ENCODE measurements at regions of chr3 and their contacts with region 1.

Region 1: GRCh38 chr3:45656575-45657363 is 32.4 kb upstream of the SACM1L start:
- DNase-seq: peak; percentile 86 to 93
- H3K4me3 ChIP-seq: no peak overlapping the region
- H3K27ac ChIP-seq: no peak overlapping the region
- H3K4me1 ChIP-seq: peaks cover 0 to 5% of the 10 kb centered on the region in 2 donors
- H3K27me3 ChIP-seq: no peaks in the 10 kb centered on the region
- CTCF ChIP-seq: peak; percentile 92 to 96 (median 93)
- POLR2A ChIP-seq: no peak

Region 2: GRCh38 chr3:45037734-45038455 is 618.9 kb before region 1 on chr3:
- intact Hi-C with region 1: loop called (anchors 5 kb)
- DNase-seq: peak; percentile 91 to 93
- H3K4me3 ChIP-seq: no peak overlapping the region
- H3K27ac ChIP-seq: no peak overlapping the region
- H3K4me1 ChIP-seq: no peaks in the 10 kb centered on the region
- H3K27me3 ChIP-seq: no peaks in the 10 kb centered on the region
- CTCF ChIP-seq: peak; percentile 87 to 97 (median 92)
- POLR2A ChIP-seq: no peak

Region 3: DNA sequence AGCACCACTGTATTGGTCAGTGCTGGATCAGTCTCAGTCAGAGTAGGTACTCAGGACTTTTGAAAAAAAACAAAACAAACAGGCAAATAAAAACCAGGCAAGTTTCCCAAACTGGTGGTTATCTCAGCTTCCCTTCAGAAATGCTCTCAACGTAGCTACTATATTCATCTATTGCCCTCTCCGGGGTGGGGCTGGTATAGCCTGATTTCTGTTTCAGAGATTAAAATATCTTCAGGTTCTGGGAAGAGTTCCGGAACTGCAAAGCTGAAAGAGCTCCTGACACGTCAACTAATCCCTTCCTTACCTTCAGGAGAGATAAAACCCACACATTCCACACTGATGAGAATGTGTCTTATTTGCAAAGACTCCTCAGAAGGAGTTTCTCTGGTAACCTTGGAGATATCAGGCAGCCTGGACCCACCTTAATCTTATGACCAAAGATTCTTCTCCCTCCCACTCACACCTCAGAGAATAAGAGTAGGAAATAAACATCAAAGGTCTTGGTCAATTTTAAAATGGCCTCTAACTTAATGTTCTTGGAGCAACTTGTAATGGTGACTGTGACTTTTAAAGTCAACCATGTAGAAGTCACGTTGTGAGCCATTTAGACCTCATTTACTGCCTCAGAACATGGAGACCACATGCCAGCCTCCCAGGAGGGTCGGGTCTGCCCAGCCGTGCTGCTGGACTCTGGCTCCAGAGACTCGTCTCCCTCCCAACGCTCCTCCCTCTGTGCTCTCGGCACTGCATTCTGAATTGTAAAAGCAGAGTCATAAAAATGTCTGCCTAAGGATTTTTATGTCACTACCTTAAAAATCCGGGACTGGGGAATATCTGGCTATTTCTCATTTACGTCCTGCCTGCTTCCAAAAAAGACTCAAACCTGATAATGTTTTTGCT is 564.4 kb before region 1 on chr3:
- intact Hi-C with region 1: no loop called
- DNase-seq: peak; percentile 65 to 79
- H3K4me3 ChIP-seq: no peak overlapping the region
- H3K27ac ChIP-seq: peak overlapping the region; percentile 84 to 89
- H3K4me1 ChIP-seq: peaks cover 0 to 6% of the 10 kb centered on the region in 2 donors
- H3K27me3 ChIP-seq: no peaks in the 10 kb centered on the region
- CTCF ChIP-seq: peak in 1 of 4 experiments; percentile 7
- POLR2A ChIP-seq: no peak

Region 4: GRCh38 chr3:45509768-45510129 is 147.0 kb before region 1 on chr3:
- intact Hi-C with region 1: loop called (anchors 5 kb)
- DNase-seq: no peak
- H3K4me3 ChIP-seq: no peak overlapping the region
- H3K27ac ChIP-seq: no peak overlapping the region
- H3K4me1 ChIP-seq: no peaks in the 10 kb centered on the region
- H3K27me3 ChIP-seq: no peaks in the 10 kb centered on the region
- CTCF ChIP-seq: no peak
- POLR2A ChIP-seq: no peak

Region 5: DNA sequence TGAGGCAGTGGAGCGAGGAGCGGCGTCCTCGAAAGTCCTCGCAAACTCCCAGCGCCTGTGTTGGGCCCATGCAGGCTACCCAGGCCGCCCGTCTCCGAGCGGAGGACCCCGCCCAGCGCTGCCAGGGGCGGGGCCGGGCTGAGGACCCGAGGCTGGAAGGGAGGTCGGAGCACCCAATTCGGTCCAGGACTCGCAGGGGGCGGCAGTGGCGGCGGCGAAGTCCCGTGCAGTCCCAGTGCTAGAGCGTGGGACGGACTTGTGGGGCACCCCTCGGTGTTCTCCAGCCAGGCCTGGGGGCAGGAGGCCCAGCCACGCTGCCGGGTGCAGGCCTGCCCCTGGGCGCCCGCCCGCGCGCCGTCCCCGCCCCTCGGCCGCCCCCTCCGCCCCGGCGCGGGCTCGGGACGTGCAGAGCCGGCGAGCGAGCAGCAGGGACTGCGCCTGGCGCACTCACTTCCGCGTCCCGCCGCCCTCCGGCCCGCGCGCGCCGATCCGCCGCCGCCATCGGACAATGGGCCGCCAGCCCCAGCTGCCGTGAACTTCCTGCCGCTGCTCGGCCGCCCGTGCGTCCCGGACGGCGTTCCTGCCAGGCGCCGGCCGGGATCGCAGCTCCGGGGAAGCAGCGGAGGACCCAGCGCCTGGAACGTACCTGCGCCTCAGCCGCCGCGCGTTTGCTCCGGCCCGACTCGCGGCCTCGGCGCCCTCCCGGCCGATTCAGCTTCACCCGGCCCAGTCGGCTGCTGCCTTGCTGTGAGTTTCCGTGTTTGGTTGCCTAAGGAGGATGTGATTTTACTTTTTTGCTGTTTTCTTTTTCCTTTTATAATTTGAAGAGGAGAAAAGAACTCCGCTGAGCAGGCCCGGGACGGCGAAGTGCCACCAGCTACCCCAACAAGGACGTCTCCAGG is 62.8 kb before region 1 on chr3:
- intact Hi-C with region 1: loop called (anchors 2 kb)
- DNase-seq: peak; percentile 57 to 73
- H3K4me3 ChIP-seq: peak overlapping the region; percentile 50 to 75
- H3K27ac ChIP-seq: peak overlapping the region; percentile 89 to 92
- H3K4me1 ChIP-seq: peaks cover 15 to 18% of the 10 kb centered on the region in 2 donors
- H3K27me3 ChIP-seq: no peaks in the 10 kb centered on the region
- CTCF ChIP-seq: no peak
- POLR2A ChIP-seq: peak; percentile 29 to 72